ENCODE measurements at regions of chr2 and their contacts with region 1.

Region 1: GRCh38 chr2:130873700-130874346 is 37.1 kb downstream of the ARHGEF4 start:
- DNase-seq: peak; percentile 46
- H3K4me3 ChIP-seq: no peak overlapping the region
- H3K27ac ChIP-seq: no peak overlapping the region
- H3K27me3 ChIP-seq: peaks cover 7% of the 10 kb centered on the region
- CTCF ChIP-seq: peak; percentile 81

Region 2: GRCh38 chr2:130768191-130768855 is 105.5 kb before region 1 on chr2:
- CTCF ChIA-PET with region 1: no interaction called
- POLR2A ChIA-PET with region 1: no interaction called
- DNase-seq: no peak
- H3K4me3 ChIP-seq: no peak overlapping the region
- H3K27ac ChIP-seq: no peak overlapping the region
- H3K27me3 ChIP-seq: peaks cover 2% of the 10 kb centered on the region
- CTCF ChIP-seq: no peak

Region 3: DNA sequence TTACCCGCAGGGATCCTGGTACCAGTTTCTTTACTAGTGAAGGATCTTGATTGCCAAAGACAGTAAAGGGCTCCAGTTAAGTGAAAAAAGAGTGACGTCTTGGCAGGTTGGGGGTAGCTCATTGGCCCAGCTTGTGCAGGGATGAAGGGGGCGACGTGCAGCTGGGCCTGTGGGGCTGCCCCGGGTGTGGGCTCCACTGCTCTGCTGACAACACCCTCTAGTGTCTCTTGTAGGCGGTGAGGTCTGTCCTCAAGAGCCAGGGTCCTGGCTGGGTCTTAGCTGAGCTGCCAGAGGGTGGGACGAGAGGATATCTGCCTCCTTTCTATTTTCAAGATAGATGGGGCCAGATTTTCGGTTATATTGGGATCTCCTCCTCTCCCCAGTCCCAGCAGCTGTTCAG is 31.1 kb before region 1 on chr2:
- CTCF ChIA-PET with region 1: interaction called, 10 read pairs
- POLR2A ChIA-PET with region 1: no interaction called
- DNase-seq: no peak
- H3K4me3 ChIP-seq: no peak overlapping the region
- H3K27ac ChIP-seq: no peak overlapping the region
- H3K27me3 ChIP-seq: peaks cover 32% of the 10 kb centered on the region
- CTCF ChIP-seq: no peak

Region 4: DNA sequence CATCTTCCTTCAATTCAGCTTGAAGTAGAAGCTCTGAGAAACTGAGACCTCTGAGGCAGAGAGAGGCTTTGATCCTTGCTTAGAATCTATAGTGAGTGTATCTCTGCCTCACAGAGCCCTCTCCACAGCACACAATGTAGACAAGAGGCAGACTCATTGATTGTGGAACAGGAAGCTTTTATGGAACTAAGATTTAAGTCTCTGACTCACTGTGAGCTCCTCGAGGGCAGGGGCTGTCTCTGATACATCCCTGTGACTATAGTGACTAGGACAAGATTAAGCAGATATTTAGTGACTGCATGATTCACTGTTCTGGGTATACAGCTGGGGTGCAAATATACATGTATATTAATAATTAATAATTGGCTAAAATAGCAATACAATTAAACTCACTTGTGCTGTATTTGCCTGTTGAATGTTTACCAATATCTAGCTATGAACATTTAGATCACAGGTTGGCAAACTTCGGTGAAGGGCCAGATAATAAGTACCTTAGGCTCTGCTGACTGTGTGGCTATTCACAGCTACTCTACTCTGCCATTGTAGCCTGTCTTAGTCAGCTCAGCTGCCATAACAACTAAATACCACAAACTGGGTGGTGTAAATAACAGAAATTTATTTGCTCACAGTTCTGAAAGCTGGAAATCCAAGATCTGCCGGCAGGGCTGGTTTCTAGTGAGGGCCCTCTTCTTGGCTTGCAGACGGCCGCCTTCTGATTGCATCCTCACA is 17.3 kb after region 1 on chr2:
- CTCF ChIA-PET with region 1: interaction called, 13 read pairs
- POLR2A ChIA-PET with region 1: no interaction called
- DNase-seq: no peak
- H3K4me3 ChIP-seq: no peak overlapping the region
- H3K27ac ChIP-seq: no peak overlapping the region
- H3K27me3 ChIP-seq: peaks cover 4% of the 10 kb centered on the region
- CTCF ChIP-seq: no peak

Region 5: GRCh38 chr2:130920415-130921163 is 46.8 kb after region 1 on chr2:
- CTCF ChIA-PET with region 1: interaction called, 19 read pairs
- POLR2A ChIA-PET with region 1: no interaction called
- DNase-seq: peak; percentile 45
- H3K4me3 ChIP-seq: no peak overlapping the region
- H3K27ac ChIP-seq: no peak overlapping the region
- H3K27me3 ChIP-seq: peaks cover 6% of the 10 kb centered on the region
- CTCF ChIP-seq: peak; percentile 92